ENCODE measurements at regions of chr13 and their contacts with region 1.

Region 1: DNA sequence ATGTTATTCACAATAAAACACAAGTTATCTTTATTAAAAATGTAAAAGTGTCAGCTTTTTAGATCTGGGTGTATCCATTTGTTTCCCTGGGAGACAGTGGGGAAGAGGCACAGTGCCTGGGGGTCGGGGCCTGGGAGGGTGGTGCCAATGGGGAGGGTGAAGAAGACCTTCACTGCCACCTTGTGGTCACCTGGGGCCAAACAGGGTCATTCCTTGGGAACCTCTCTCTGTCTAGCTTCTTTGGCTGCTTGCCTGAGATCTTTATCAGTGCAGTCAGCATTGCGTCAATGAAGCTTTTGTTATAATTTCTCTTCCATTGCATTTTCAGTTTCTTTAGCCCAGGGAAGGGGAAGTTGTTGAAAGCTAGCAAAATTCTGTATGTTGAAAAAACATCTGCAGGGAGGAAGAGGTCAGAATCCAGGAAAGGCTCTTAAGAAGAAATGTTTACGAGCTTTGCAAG is 39.1 kb downstream of the PCDH8 start:
- DNase-seq: peak; percentile 82
- H3K4me3 Mint-ChIP-seq: no peak overlapping the region
- H3K27ac Mint-ChIP-seq: no peak overlapping the region
- H3K4me1 Mint-ChIP-seq: peaks cover 4% of the 10 kb centered on the region
- H3K27me3 Mint-ChIP-seq: peaks cover 2% of the 10 kb centered on the region

Region 2: GRCh38 chr13:52665325-52665724 is 144.0 kb before region 1 on chr13:
- intact Hi-C with region 1: loop called (anchors 1 kb)
- DNase-seq: no peak
- H3K4me3 Mint-ChIP-seq: no peak overlapping the region
- H3K27ac Mint-ChIP-seq: no peak overlapping the region
- H3K4me1 Mint-ChIP-seq: no peaks in the 10 kb centered on the region
- H3K27me3 Mint-ChIP-seq: no peaks in the 10 kb centered on the region

Region 3: DNA sequence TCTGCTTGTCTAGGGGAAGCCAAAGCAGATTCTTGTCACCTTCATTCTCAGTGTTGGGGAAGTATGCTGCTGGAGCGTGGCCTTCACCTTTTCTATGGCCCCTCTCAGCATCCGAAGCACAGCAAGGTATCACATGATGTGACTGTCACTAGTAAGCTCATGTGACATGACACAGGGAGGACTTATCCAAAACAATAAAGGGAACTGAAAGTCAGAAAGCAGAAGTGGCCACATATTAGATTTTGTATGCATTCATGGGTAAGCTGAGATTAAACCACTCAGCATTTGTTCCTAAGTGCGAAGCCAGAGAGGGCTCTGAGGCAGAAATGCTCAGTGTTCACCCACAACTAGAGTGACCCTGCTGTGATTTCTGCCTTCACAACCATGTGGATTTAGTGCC is 111.9 kb after region 1 on chr13:
- intact Hi-C with region 1: no loop called
- DNase-seq: no peak
- H3K4me3 Mint-ChIP-seq: no peak overlapping the region
- H3K27ac Mint-ChIP-seq: no peak overlapping the region
- H3K4me1 Mint-ChIP-seq: no peaks in the 10 kb centered on the region
- H3K27me3 Mint-ChIP-seq: no peaks in the 10 kb centered on the region

Region 4: GRCh38 chr13:53112525-53112924 is 303.2 kb after region 1 on chr13:
- intact Hi-C with region 1: no loop called
- DNase-seq: no peak
- H3K4me3 Mint-ChIP-seq: no peak overlapping the region
- H3K27ac Mint-ChIP-seq: no peak overlapping the region
- H3K4me1 Mint-ChIP-seq: no peaks in the 10 kb centered on the region
- H3K27me3 Mint-ChIP-seq: no peaks in the 10 kb centered on the region